K562 (cell line): ENCODE measurements at regions of chr21 and their contacts with region 1.

Region 1: GRCh38 chr21:39125752-39126485 is 57.3 kb downstream of the PSMG1 start:
- DNase-seq: peak in 1 of 4 experiments; percentile 56
- ATAC-seq: peak; percentile 94
- H3K4me3 ChIP-seq: no peak overlapping the region
- H3K27ac ChIP-seq: no peak overlapping the region
- H3K4me1 ChIP-seq: no peaks in the 10 kb centered on the region
- H3K27me3 ChIP-seq: peaks cover 0 to 16% of the 10 kb centered on the region in 2 experiments; a peak in 3 of 5 replicates
- CTCF ChIP-seq: peak; percentile 55 to 69 (median 65)
- EP300 ChIP-seq: no peak
- POLR2A ChIP-seq: no peak
- RAD21 ChIP-seq: peak; percentile 61 to 81

Region 2: GRCh38 chr21:38614192-38614957 is 511.5 kb before region 1 on chr21:
- CTCF ChIA-PET with region 1: no interaction called
- POLR2A ChIA-PET with region 1: no interaction called
- in situ Hi-C with region 1: no loop called
- intact Hi-C with region 1: no loop called
- DNase-seq: no peak
- ATAC-seq: no peak
- H3K4me3 ChIP-seq: no peak overlapping the region
- H3K27ac ChIP-seq: no peak overlapping the region
- H3K4me1 ChIP-seq: no peaks in the 10 kb centered on the region
- H3K27me3 ChIP-seq: peaks cover 5 to 16% of the 10 kb centered on the region in 2 experiments; a peak in 4 of 5 replicates
- CTCF ChIP-seq: no peak; a peak in 1 of 6 replicates
- EP300 ChIP-seq: no peak
- POLR2A ChIP-seq: no peak
- RAD21 ChIP-seq: no peak

Region 3: DNA sequence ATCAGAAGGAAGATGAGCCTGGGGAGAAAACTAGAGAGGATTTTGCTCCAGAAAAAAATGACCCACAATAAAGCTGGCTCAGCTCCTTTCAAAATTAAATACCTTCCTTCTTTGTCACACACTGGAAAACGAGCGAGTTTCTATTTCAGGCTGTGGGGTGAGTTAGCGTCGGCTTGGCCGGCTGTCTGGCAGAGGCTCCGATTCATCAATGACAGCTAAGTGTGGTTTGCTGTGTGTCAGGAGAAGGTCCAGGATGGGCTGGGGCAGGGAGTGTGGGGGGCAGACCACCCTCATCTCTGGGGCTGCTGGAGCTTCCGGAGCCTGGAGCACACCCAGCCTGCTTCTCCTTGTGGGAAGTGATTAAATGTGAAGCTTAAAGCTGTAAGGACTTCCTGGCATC is 200.0 kb before region 1 on chr21:
- CTCF ChIA-PET with region 1: no interaction called
- POLR2A ChIA-PET with region 1: interaction called, 3 read pairs
- in situ Hi-C with region 1: no loop called
- intact Hi-C with region 1: loop called (anchors 10 kb)
- DNase-seq: no peak
- ATAC-seq: no peak; the same call in 2 of the 3 replicates
- H3K4me3 ChIP-seq: no peak overlapping the region
- H3K27ac ChIP-seq: no peak overlapping the region
- H3K4me1 ChIP-seq: no peaks in the 10 kb centered on the region
- H3K27me3 ChIP-seq: peaks cover 13 to 23% of the 10 kb centered on the region in 2 experiments
- CTCF ChIP-seq: no peak
- EP300 ChIP-seq: no peak
- POLR2A ChIP-seq: no peak
- RAD21 ChIP-seq: no peak

Region 4: GRCh38 chr21:39088831-39089380 is 37.0 kb before region 1 on chr21:
- CTCF ChIA-PET with region 1: no interaction called
- POLR2A ChIA-PET with region 1: no interaction called
- in situ Hi-C with region 1: no loop called
- intact Hi-C with region 1: loop called (anchors 1 kb)
- DNase-seq: peak; percentile 29 to 43 (median 38)
- ATAC-seq: peak; percentile 69
- H3K4me3 ChIP-seq: no peak overlapping the region
- H3K27ac ChIP-seq: no peak overlapping the region
- H3K4me1 ChIP-seq: peaks cover 0 to 6% of the 10 kb centered on the region in 2 experiments; a peak in 2 of 5 replicates
- H3K27me3 ChIP-seq: peaks cover 65 to 89% of the 10 kb centered on the region in 2 experiments
- CTCF ChIP-seq: peak; percentile 44 to 72 (median 68)
- EP300 ChIP-seq: no peak
- POLR2A ChIP-seq: no peak
- RAD21 ChIP-seq: peak; percentile 25 to 73

Region 5: DNA sequence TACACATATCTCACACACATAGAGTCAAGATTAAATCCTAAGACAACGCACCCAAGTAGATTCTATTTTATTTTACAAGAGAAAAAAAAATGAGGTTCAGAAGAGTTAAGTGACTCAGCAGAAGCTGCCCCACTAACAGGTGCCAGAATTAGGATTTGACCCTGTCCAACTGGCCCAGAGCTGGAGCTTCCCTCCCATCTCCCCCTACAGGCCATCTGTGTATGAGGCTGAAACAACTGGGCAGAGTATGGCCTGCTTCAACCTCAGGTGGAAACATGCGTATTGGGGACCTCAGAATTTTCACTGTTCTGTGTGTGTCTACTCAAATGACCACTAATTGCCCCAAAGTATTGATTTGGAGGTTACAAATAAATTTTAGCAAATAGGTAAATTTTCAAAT is 27.5 kb after region 1 on chr21:
- CTCF ChIA-PET with region 1: no interaction called
- POLR2A ChIA-PET with region 1: no interaction called
- in situ Hi-C with region 1: no loop called
- intact Hi-C with region 1: no loop called
- DNase-seq: peak; percentile 55 to 76 (median 63)
- ATAC-seq: peak; percentile 94
- H3K4me3 ChIP-seq: no peak overlapping the region
- H3K27ac ChIP-seq: no peak overlapping the region
- H3K4me1 ChIP-seq: no peaks in the 10 kb centered on the region; a peak in 1 of 5 replicates
- H3K27me3 ChIP-seq: peaks cover 5 to 8% of the 10 kb centered on the region in 2 experiments; a peak in 3 of 5 replicates
- CTCF ChIP-seq: peak; percentile 67 to 79 (median 73)
- EP300 ChIP-seq: no peak
- POLR2A ChIP-seq: no peak
- RAD21 ChIP-seq: peak in 1 of 2 experiments; percentile 24; a peak in 1 of 4 replicates